ENCODE measurements at regions of chr7 and their contacts with region 1.

Region 1: DNA sequence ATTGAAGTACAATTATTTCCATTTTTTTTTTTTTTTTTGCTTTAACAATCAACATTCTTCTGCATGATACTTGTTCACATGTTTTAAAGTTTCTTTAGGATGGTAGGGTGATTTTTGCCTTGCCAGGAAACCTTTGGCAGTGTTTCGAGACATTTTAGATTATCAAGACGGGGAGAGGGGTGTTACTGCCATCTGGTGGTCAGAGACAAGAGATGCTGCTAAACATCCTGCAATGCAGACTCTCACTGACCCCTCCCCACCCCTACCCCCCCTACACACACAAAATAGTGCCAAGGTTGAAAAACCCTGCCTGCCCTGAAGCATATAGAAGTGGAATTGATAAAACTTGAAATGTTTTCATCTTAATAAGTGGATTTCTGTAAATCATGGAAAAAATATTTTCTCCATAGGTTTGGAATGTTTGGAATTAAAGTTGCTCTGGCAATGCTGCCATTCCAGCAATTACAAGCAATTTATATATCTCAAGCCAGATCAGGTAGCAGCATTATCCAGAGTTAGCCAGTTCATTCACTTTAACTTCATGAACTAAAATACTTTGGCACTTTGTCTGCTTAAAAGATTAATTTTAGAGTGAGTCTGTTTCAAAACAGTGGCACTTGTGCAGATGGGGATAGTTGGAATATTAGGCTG is 62.1 kb downstream of the SDHAF3 start:
- H3K4me3 Mint-ChIP-seq: no peak overlapping the region
- H3K27ac Mint-ChIP-seq: no peak overlapping the region
- H3K4me1 Mint-ChIP-seq: peaks cover 10% of the 10 kb centered on the region
- H3K27me3 Mint-ChIP-seq: no peaks in the 10 kb centered on the region

Region 2: DNA sequence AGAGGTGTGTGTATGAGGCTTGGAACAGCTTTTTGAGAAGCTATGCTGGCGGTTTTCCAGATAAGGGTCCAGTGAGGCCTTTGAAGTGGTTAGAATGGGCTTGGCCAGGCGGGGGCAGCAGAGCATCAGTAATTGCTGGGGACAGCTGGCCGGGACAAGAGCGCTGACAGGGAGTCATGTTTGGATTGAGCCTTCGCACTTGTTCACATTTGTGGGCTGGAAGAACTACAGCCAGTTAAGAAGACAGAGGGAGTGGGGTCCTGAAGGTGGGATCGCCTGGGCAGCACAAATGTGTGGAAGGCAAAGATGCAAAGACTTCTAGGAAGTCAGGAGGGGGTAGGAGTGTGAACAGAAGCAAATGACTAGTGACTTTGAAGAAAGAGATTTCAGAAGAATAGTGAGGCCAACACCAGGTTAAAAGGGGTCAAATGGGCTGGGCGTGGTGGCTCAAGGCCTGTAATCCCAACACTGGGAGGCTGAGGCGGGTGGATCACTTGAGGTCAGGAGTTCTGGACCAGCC is 74.8 kb before region 1 on chr7:
- intact Hi-C with region 1: loop called (anchors 1 kb)
- H3K4me3 Mint-ChIP-seq: no peak overlapping the region
- H3K27ac Mint-ChIP-seq: no peak overlapping the region
- H3K4me1 Mint-ChIP-seq: no peaks in the 10 kb centered on the region
- H3K27me3 Mint-ChIP-seq: peaks cover 12% of the 10 kb centered on the region

Region 3: GRCh38 chr7:97145068-97145467 is 34.5 kb before region 1 on chr7:
- intact Hi-C with region 1: loop called (anchors 2 kb)
- H3K4me3 Mint-ChIP-seq: no peak overlapping the region
- H3K27ac Mint-ChIP-seq: no peak overlapping the region
- H3K4me1 Mint-ChIP-seq: no peaks in the 10 kb centered on the region
- H3K27me3 Mint-ChIP-seq: no peaks in the 10 kb centered on the region